ENCODE measurements at regions of chr2 and their contacts with region 1.

Region 1: GRCh38 chr2:74975016-74975415 is 16.6 kb downstream of the POLE4 start:
- DNase-seq: no peak
- ATAC-seq: no peak
- H3K4me3 ChIP-seq: no peak overlapping the region
- H3K4me3 Mint-ChIP-seq: no peak overlapping the region
- H3K27ac ChIP-seq: no peak overlapping the region
- H3K27ac Mint-ChIP-seq: no peak overlapping the region
- H3K4me1 ChIP-seq: no peaks in the 10 kb centered on the region
- H3K4me1 Mint-ChIP-seq: peaks cover 0 to 13% (median 8%) of the 10 kb centered on the region in 7 donors
- H3K27me3 ChIP-seq: no peaks in the 10 kb centered on the region
- H3K27me3 Mint-ChIP-seq: no peaks in the 10 kb centered on the region

Region 2: DNA sequence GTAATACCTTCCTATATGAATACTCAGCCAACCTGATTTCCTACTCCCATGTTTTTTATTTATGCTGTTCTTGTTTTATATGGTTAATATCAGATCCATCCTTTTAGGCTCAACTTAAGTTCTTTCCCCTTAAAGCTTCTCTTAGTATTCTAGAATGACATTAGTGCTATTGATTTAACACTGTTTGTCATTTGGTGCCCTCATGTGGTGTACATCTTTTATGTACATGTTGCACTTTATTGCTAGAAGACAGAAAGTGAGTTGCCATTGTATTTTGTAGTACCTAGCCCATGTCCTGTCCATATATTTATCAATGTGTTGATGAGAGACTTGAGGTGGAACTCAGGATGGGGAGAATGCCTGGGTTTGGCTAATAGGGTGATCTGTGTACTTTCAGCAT is 442.8 kb before region 1 on chr2:
- CTCF ChIA-PET with region 1: no interaction called
- POLR2A ChIA-PET with region 1: no interaction called
- intact Hi-C with region 1: no loop called
- DNase-seq: peak in 5 of 9 donors; percentile 27 to 59 (median 47)
- ATAC-seq: no peak
- H3K4me3 ChIP-seq: no peak overlapping the region
- H3K4me3 Mint-ChIP-seq: peak overlapping the region; percentile 19 to 91 (median 52)
- H3K27ac ChIP-seq: no peak overlapping the region
- H3K27ac Mint-ChIP-seq: peak overlapping the region in 6 of 9 donors; percentile 15 to 60 (median 40)
- H3K4me1 ChIP-seq: peaks cover 11 to 25% of the 10 kb centered on the region in 2 donors
- H3K4me1 Mint-ChIP-seq: peaks cover 28 to 40% (median 33%) of the 10 kb centered on the region in 7 donors
- H3K27me3 ChIP-seq: no peaks in the 10 kb centered on the region
- H3K27me3 Mint-ChIP-seq: peaks cover 0 to 2% (median 0%) of the 10 kb centered on the region in 5 donors

Region 3: DNA sequence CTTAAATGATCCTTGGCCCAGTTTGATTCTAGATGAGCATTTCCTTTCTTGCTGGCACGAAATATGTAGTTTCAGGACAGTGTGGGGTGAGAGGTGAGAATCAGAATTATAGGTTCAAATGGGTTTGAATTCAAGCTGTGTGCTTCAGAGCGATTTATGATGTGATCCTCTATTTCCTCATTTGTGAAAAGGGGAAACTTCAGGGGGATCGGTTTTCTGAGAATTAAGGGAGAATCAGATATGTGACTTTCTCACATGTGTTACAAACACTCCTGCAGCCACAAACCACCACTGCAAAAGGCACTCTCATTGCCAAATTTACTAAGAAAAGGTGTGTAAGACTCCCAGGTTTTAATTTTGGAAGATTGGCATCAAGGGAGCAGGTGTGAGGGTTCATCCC is 116.7 kb before region 1 on chr2:
- CTCF ChIA-PET with region 1: interaction called, 10 read pairs
- POLR2A ChIA-PET with region 1: no interaction called
- intact Hi-C with region 1: no loop called
- DNase-seq: no peak
- ATAC-seq: no peak
- H3K4me3 ChIP-seq: no peak overlapping the region
- H3K4me3 Mint-ChIP-seq: no peak overlapping the region
- H3K27ac ChIP-seq: no peak overlapping the region
- H3K27ac Mint-ChIP-seq: peak overlapping the region in 1 of 9 donors; percentile 26
- H3K4me1 ChIP-seq: no peaks in the 10 kb centered on the region
- H3K4me1 Mint-ChIP-seq: peaks cover 5 to 46% (median 15%) of the 10 kb centered on the region in 7 donors
- H3K27me3 ChIP-seq: no peaks in the 10 kb centered on the region
- H3K27me3 Mint-ChIP-seq: no peaks in the 10 kb centered on the region

Measured in naive thymus-derived CD4-positive, alpha-beta T cell (primary cell).